Activated T-helper 2 cell treated with anti-CD3 and anti-CD28 coated beads, Interferon-gamma antibody, Interleukin-2, Interleukin-4, amounts not matched to agents 10 μg/mL and 5 μg/mL and 100 μg/mL, durations not matched to agents 14 hours and 24 hours and 36 hours (primary cell): ENCODE measurements at regions of chr9 and their contacts with region 1.

Region 1: GRCh38 chr9:122453677-122454135 is 24.0 kb downstream of the OR1J1 start:
- DNase-seq: no peak
- H3K4me3 Mint-ChIP-seq: no peak overlapping the region
- H3K27ac Mint-ChIP-seq: no peak overlapping the region
- H3K4me1 Mint-ChIP-seq: no peaks in the 10 kb centered on the region
- H3K27me3 Mint-ChIP-seq: peaks cover 20% of the 10 kb centered on the region

Region 2: DNA sequence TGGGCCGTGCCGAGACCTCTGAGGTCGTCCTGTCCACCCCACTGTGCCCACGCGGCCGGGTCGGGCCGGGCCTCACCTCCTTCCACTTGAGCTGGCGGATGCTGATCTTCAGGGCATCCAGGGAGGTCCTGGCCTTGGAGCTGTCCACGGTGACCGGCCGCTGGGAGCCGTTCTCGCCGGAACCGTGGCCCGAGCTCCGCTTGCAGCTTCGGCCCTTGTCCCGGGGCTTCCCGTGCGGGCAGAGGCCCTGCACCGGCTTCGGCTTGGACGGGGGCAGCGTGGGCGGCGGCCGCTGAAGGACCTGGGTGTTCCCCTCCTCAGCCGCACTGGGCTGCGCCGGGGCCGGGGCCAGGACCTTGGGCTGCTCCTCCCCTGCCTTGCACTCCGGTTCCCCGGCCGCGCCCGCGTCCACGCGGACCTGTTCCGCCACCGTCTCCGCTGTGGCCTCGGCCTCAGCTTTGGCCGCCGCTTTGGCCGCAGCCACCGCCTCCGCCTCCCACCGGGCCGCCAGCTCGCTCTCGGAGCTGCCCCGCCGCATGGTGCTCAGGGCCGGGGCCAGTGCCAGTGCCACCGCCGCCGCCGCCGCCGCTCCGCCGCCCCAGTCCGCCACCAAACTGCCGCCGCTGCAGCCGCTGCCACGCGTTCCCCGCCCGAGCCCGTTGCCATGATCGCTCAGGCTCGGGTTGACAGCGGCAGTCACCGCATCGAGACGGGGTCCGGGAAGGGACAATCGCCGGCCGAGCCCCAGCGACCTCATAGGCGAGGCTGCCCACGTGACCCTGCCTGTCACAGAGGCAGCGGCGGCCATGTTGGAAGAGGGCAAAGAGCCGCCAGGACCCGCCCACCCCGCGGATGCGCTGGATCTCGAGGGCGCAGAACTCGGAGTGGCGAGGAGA is 360.8 kb before region 1 on chr9 and contains the start of gene TTLL11:
- intact Hi-C with region 1: loop called (anchors 10 kb)
- DNase-seq: peak; percentile 93
- H3K4me3 Mint-ChIP-seq: peak within 1 kb of the TSS; percentile 87
- H3K27ac Mint-ChIP-seq: peak within 1 kb of the TSS; percentile 37
- H3K4me1 Mint-ChIP-seq: peaks cover 19% of the 10 kb centered on the region
- H3K27me3 Mint-ChIP-seq: peaks cover 17% of the 10 kb centered on the region
- total RNA-seq, gene TTLL11: 2.2 and 2.4 TPM in 2 replicates

Region 3: GRCh38 chr9:122125158-122125508 is 328.6 kb before region 1 on chr9:
- intact Hi-C with region 1: loop called (anchors 1 kb)
- DNase-seq: peak; percentile 63
- H3K4me3 Mint-ChIP-seq: no peak overlapping the region
- H3K27ac Mint-ChIP-seq: no peak overlapping the region
- H3K4me1 Mint-ChIP-seq: peaks cover 7% of the 10 kb centered on the region
- H3K27me3 Mint-ChIP-seq: peaks cover 30% of the 10 kb centered on the region

Region 4: GRCh38 chr9:122374885-122375420 is 78.8 kb before region 1 on chr9:
- intact Hi-C with region 1: loop called (anchors 5 kb)
- DNase-seq: no peak
- H3K4me3 Mint-ChIP-seq: no peak overlapping the region
- H3K27ac Mint-ChIP-seq: no peak overlapping the region
- H3K4me1 Mint-ChIP-seq: peaks cover 7% of the 10 kb centered on the region
- H3K27me3 Mint-ChIP-seq: peaks cover 20% of the 10 kb centered on the region

Region 5: DNA sequence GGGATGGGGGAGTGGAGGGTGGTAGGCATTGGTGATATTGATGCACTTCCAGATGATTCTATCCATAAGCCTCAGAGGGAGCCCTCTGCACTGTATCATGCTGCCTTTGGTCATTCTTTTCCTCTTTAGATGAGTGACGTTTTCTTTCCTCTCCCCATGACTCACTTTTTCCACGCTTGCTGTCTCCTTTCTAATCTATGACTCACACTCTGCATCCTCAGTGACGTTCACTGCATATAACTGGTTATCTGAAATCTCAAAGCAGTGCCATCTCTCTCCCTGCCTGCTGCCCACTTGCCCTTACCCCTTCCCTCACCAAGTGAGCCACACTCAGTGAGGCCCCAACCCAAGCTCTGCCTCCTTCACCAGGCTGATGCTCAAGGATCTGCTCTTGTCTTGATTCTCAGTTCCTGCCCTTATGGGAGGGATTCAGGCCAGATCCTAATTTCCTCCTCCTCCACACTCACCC is 51.3 kb before region 1 on chr9:
- intact Hi-C with region 1: loop called (anchors 5 kb)
- DNase-seq: peak; percentile 32
- H3K4me3 Mint-ChIP-seq: no peak overlapping the region
- H3K27ac Mint-ChIP-seq: peak overlapping the region; percentile 83
- H3K4me1 Mint-ChIP-seq: peaks cover 23% of the 10 kb centered on the region
- H3K27me3 Mint-ChIP-seq: no peaks in the 10 kb centered on the region

Region 6: DNA sequence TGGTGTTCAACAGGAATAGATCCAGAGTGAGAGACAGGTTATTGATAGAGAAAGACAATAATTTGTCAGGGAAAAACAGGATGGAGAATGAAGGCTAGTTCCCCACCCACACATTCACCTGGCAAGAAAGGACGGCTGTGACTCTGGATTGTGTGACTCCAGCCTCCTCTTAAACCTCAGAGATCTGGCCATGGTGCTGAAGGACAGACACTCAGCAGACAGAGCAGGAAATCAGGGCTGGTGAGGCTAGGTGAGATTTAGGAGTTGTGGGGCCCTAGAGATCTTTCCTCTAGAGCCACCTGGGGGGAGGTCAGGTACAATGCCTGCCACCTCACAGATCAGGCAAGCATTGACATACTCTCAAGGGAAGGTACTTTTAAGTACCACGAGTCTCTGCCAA is 188.5 kb after region 1 on chr9:
- intact Hi-C with region 1: no loop called
- DNase-seq: no peak
- H3K4me3 Mint-ChIP-seq: no peak overlapping the region
- H3K27ac Mint-ChIP-seq: no peak overlapping the region
- H3K4me1 Mint-ChIP-seq: no peaks in the 10 kb centered on the region
- H3K27me3 Mint-ChIP-seq: no peaks in the 10 kb centered on the region